K562 (cell line): ENCODE measurements at regions of chr4 and their contacts with region 1.

Region 1: GRCh38 chr4:119286377-119287002 is 35.4 kb downstream of the FABP2 start:
- DNase-seq: peak in 1 of 4 experiments; percentile 56
- ATAC-seq: no peak
- H3K4me3 ChIP-seq: no peak overlapping the region
- H3K27ac ChIP-seq: no peak overlapping the region
- H3K4me1 ChIP-seq: no peaks in the 10 kb centered on the region
- H3K27me3 ChIP-seq: no peaks in the 10 kb centered on the region
- CTCF ChIP-seq: peak; percentile 44 to 76 (median 47); a peak in 5 of 6 replicates
- EP300 ChIP-seq: no peak
- POLR2A ChIP-seq: no peak
- RAD21 ChIP-seq: peak; percentile 76 to 79

Region 2: DNA sequence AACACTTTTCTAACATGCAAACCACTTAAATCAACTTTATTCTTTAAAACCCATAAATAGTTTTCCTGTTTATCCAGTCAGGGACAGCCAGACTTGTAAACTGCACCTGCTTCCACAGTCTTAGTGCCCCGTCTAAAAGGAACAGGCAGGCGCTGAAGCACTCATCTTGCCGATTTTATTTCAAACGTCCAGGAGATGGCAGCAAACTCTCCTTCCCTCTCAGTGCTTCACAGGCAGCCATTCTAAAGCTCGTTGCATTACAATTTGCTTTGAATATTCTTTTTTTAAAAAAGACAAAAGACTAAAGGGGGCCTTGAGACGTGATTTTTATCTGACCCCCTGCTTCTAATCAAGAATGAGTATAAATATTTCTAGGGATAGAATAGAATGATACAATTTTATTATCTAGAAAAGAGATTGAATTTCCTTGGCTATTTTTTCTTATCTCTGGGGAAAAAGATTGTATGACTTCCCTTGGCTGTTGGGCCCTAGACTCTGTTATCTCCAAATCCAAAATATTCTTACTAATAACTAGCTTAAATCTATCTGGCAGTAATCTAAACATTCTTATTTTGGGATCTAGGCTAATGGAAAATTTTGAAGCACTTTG is 244.4 kb before region 1 on chr4:
- CTCF ChIA-PET with region 1: interaction called, 34 read pairs
- POLR2A ChIA-PET with region 1: no interaction called
- in situ Hi-C with region 1: loop called (anchors 10 kb)
- intact Hi-C with region 1: loop called (anchors 1 kb)
- DNase-seq: peak; percentile 33 to 71 (median 50)
- ATAC-seq: peak; percentile 97
- H3K4me3 ChIP-seq: no peak overlapping the region
- H3K27ac ChIP-seq: no peak overlapping the region
- H3K4me1 ChIP-seq: no peaks in the 10 kb centered on the region
- H3K27me3 ChIP-seq: no peaks in the 10 kb centered on the region
- CTCF ChIP-seq: peak; percentile 65 to 72 (median 69)
- EP300 ChIP-seq: no peak
- POLR2A ChIP-seq: no peak
- RAD21 ChIP-seq: peak; percentile 77 to 84

Region 3: GRCh38 chr4:119138046-119138445 is 148.4 kb before region 1 on chr4:
- CTCF ChIA-PET with region 1: no interaction called
- POLR2A ChIA-PET with region 1: no interaction called
- in situ Hi-C with region 1: no loop called
- intact Hi-C with region 1: loop called (anchors 10 kb)
- DNase-seq: no peak
- ATAC-seq: no peak
- H3K4me3 ChIP-seq: no peak overlapping the region
- H3K27ac ChIP-seq: no peak overlapping the region
- H3K4me1 ChIP-seq: no peaks in the 10 kb centered on the region
- H3K27me3 ChIP-seq: no peaks in the 10 kb centered on the region
- CTCF ChIP-seq: no peak
- EP300 ChIP-seq: no peak
- POLR2A ChIP-seq: no peak
- RAD21 ChIP-seq: no peak

Region 4: GRCh38 chr4:119212234-119212963 is 74.1 kb before region 1 on chr4 and contains the start of gene USP53:
- CTCF ChIA-PET with region 1: no interaction called
- POLR2A ChIA-PET with region 1: no interaction called
- in situ Hi-C with region 1: no loop called
- intact Hi-C with region 1: loop called (anchors 1 kb)
- DNase-seq: peak; percentile 97 to 98 (median 97)
- ATAC-seq: peak; percentile 95
- H3K4me3 ChIP-seq: peak within 1 kb of the TSS; percentile 72
- H3K27ac ChIP-seq: peak within 1 kb of the TSS; percentile 87
- H3K4me1 ChIP-seq: peaks cover 4 to 8% of the 10 kb centered on the region in 2 experiments; a peak in 4 of 5 replicates
- H3K27me3 ChIP-seq: no peaks in the 10 kb centered on the region
- CTCF ChIP-seq: no peak
- EP300 ChIP-seq: no peak
- POLR2A ChIP-seq: peak; percentile 97
- RAD21 ChIP-seq: no peak; a peak in 1 of 4 replicates
- polyA plus RNA-seq, gene USP53: 2.9 TPM

Region 5: GRCh38 chr4:119227690-119228089 is 58.8 kb before region 1 on chr4:
- CTCF ChIA-PET with region 1: no interaction called
- POLR2A ChIA-PET with region 1: no interaction called
- in situ Hi-C with region 1: no loop called
- intact Hi-C with region 1: no loop called
- DNase-seq: no peak
- ATAC-seq: no peak
- H3K4me3 ChIP-seq: no peak overlapping the region
- H3K27ac ChIP-seq: no peak overlapping the region
- H3K4me1 ChIP-seq: peaks cover 0 to 2% of the 10 kb centered on the region in 2 experiments; a peak in 1 of 5 replicates
- H3K27me3 ChIP-seq: no peaks in the 10 kb centered on the region
- CTCF ChIP-seq: no peak
- EP300 ChIP-seq: no peak
- POLR2A ChIP-seq: no peak
- RAD21 ChIP-seq: no peak

Region 6: DNA sequence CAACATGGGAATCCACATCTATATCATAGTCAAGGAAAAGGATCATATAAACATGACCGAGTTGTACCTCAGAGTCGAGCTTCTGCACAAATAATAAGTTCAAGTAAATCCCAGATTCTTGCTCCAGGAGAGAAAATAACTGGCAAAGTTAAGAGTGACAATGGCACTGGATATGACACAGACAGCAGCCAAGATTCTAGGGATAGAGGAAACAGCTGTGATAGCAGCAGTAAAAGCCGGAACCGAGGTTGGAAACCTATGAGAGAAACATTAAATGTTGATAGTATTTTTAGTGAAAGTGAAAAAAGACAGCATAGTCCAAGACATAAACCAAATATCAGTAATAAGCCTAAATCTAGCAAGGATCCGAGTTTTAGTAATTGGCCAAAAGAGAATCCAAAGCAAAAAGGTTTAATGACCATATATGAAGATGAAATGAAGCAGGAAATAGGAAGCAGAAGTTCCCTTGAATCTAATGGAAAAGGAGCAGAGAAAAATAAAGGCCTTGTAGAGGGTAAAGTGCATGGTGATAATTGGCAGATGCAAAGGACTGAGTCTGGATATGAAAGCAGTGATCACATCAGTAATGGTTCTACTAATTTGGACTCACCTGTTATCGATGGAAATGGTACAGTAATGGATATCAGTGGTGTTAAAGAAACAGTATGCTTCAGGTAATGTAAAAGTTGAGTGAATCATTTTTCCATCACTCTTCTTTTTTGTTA is 15.0 kb before region 1 on chr4:
- CTCF ChIA-PET with region 1: no interaction called
- POLR2A ChIA-PET with region 1: no interaction called
- in situ Hi-C with region 1: no loop called
- intact Hi-C with region 1: no loop called
- DNase-seq: no peak
- ATAC-seq: no peak
- H3K4me3 ChIP-seq: no peak overlapping the region
- H3K27ac ChIP-seq: no peak overlapping the region
- H3K4me1 ChIP-seq: no peaks in the 10 kb centered on the region
- H3K27me3 ChIP-seq: no peaks in the 10 kb centered on the region
- CTCF ChIP-seq: no peak
- EP300 ChIP-seq: no peak
- POLR2A ChIP-seq: no peak
- RAD21 ChIP-seq: no peak

Region 7: DNA sequence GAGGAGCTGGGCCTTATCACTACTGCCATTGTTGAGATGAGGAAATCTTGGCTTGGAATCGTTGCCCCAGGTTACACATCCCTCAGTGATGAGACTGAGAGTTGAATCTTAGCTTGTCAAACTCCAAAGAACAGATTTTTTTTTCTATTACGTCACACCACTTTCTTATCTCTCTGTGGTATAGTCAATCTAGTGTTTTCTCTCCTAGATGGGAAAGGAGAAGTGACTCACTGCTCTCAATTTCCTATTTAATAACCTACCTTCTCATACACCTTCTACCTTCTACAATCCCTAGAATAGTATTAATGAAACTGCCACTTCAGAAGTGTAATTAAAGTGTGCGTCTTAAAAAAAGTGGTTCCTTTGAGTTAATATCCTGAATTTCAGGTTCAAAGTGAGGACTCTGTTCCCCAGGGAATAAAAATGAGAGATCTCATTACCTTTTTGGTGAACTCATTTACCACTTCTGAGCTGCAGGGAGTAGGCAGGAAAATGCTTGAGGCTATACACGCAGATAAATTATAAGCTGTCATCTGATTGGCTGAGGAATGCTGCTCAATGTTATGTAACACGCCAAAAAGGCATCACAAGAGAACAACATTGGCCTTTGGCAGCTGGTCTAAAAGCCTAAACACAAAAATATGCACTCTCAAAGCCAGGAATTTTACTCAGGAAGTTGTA is 720.8 kb after region 1 on chr4:
- CTCF ChIA-PET with region 1: no interaction called
- POLR2A ChIA-PET with region 1: no interaction called
- in situ Hi-C with region 1: no loop called
- intact Hi-C with region 1: no loop called
- DNase-seq: no peak
- ATAC-seq: no peak
- H3K4me3 ChIP-seq: no peak overlapping the region
- H3K27ac ChIP-seq: no peak overlapping the region
- H3K4me1 ChIP-seq: no peaks in the 10 kb centered on the region
- H3K27me3 ChIP-seq: no peaks in the 10 kb centered on the region
- CTCF ChIP-seq: no peak
- EP300 ChIP-seq: no peak
- POLR2A ChIP-seq: no peak
- RAD21 ChIP-seq: no peak